Transverse colon (tissue), 4 donors: ENCODE measurements at regions of chr5 and their contacts with region 1.

Region 1: DNA sequence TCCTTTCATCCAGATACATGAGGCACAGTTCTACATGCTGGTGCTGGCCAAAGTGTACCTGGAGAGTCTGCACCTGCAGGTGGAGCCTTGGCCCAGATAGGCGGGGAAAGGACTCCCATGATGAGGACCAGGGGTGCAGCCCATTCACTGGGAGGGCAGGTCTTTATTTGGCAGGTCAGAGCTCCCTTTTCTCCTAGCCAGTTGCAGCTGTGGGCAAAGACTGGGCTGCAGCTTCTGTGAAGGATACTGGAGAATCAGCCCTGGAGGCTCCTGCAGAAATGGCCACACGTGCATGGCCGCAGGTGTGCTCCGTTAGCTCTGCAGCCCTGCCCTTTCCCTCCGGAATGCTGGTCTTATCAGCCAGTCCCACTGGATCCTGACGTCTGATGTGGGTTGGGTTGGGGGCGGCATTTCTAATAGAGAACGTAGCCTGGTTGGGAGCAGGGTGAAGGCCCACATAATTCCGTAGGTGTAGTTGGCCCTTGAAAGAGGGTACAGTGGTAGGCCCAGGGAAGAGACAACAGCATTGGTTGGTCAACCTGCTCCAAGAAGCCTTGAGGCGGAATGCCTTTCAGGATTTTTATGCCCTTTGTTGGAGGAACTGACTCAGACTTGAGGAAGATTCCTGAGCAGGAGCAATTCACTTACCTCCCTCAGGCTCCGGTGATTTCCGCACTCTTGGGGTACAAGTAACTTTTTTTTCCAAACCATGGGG is 21.9 kb upstream of the TIFAB start:
- DNase-seq: no peak
- H3K4me3 ChIP-seq: no peak overlapping the region
- H3K27ac ChIP-seq: no peak overlapping the region
- H3K4me1 ChIP-seq: no peaks in the 10 kb centered on the region
- H3K27me3 ChIP-seq: peaks cover 57% of the 10 kb centered on the region
- CTCF ChIP-seq: no peak
- EP300 ChIP-seq: no peak
- POLR2A ChIP-seq: no peak

Region 2: GRCh38 chr5:136927571-136927970 is 1453.5 kb after region 1 on chr5:
- in situ Hi-C with region 1: no loop called
- intact Hi-C with region 1: loop called (anchors 5 kb)
- DNase-seq: no peak
- H3K4me3 ChIP-seq: no peak overlapping the region
- H3K27ac ChIP-seq: no peak overlapping the region
- H3K4me1 ChIP-seq: no peaks in the 10 kb centered on the region
- H3K27me3 ChIP-seq: no peaks in the 10 kb centered on the region
- CTCF ChIP-seq: no peak
- EP300 ChIP-seq: no peak
- POLR2A ChIP-seq: no peak